ENCODE measurements at regions of chr2 and their contacts with region 1.

Region 1: GRCh38 chr2:235390103-235390812 is 103.6 kb upstream of the AGAP1 start:
- DNase-seq: peak; percentile 53
- H3K4me3 Mint-ChIP-seq: no peak overlapping the region
- H3K27ac Mint-ChIP-seq: peak overlapping the region; percentile 1
- H3K4me1 Mint-ChIP-seq: peaks cover 28% of the 10 kb centered on the region
- H3K27me3 Mint-ChIP-seq: peaks cover 21% of the 10 kb centered on the region
- CTCF ChIP-seq: no peak

Region 2: DNA sequence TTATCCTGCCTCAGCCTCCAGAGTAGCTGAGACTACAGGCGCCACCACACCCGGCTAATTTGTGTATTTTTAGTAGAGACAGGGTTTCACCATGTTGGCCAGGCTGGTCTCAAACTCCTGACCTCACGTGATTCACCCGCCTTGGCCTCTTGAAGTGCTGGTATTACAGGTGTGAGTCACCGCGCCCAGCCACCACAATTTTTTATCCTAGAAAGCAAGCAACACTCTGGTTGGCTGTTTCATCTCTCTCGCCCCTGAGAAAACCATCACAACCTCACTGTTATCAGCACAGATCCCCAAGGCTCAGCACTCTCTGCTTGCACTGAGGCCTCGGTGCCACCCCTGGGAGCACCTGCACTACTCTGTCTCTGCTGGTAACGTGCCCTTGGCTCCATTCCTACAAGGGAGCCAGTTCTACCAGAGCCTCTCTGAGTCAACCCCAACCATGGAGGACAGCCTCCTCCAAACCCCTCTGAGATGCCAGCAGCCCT is 31.2 kb before region 1 on chr2:
- CTCF ChIA-PET with region 1: no interaction called
- intact Hi-C with region 1: no loop called
- DNase-seq: peak; percentile 67
- H3K4me3 Mint-ChIP-seq: no peak overlapping the region
- H3K27ac Mint-ChIP-seq: peak overlapping the region; percentile 34
- H3K4me1 Mint-ChIP-seq: peaks cover 17% of the 10 kb centered on the region
- H3K27me3 Mint-ChIP-seq: peaks cover 24% of the 10 kb centered on the region
- CTCF ChIP-seq: no peak

Region 3: GRCh38 chr2:235406430-235406829 is 16.2 kb after region 1 on chr2:
- CTCF ChIA-PET with region 1: interaction called, 13 read pairs
- intact Hi-C with region 1: no loop called
- DNase-seq: no peak
- H3K4me3 Mint-ChIP-seq: no peak overlapping the region
- H3K27ac Mint-ChIP-seq: no peak overlapping the region
- H3K4me1 Mint-ChIP-seq: peaks cover 29% of the 10 kb centered on the region
- H3K27me3 Mint-ChIP-seq: peaks cover 9% of the 10 kb centered on the region
- CTCF ChIP-seq: no peak

Measured in Calu3 (cell line).